SK-N-SH (cell line): ENCODE measurements at regions of chr15 and their contacts with region 1.

Region 1: GRCh38 chr15:77543159-77543882 is 89.4 kb downstream of the LINGO1 start:
- DNase-seq: peak; percentile 95
- H3K4me3 ChIP-seq: peak overlapping the region; percentile 42 to 46; a peak in 3 of 4 replicates
- H3K27ac ChIP-seq: peak overlapping the region; percentile 16 to 17; a peak in 1 of 4 replicates
- H3K4me1 ChIP-seq: peaks cover 16 to 25% of the 10 kb centered on the region in 2 experiments; a peak in 3 of 4 replicates
- H3K27me3 ChIP-seq: no peaks in the 10 kb centered on the region
- CTCF ChIP-seq: peak; percentile 97
- EP300 ChIP-seq: no peak
- RAD21 ChIP-seq: peak; percentile 99

Region 2: DNA sequence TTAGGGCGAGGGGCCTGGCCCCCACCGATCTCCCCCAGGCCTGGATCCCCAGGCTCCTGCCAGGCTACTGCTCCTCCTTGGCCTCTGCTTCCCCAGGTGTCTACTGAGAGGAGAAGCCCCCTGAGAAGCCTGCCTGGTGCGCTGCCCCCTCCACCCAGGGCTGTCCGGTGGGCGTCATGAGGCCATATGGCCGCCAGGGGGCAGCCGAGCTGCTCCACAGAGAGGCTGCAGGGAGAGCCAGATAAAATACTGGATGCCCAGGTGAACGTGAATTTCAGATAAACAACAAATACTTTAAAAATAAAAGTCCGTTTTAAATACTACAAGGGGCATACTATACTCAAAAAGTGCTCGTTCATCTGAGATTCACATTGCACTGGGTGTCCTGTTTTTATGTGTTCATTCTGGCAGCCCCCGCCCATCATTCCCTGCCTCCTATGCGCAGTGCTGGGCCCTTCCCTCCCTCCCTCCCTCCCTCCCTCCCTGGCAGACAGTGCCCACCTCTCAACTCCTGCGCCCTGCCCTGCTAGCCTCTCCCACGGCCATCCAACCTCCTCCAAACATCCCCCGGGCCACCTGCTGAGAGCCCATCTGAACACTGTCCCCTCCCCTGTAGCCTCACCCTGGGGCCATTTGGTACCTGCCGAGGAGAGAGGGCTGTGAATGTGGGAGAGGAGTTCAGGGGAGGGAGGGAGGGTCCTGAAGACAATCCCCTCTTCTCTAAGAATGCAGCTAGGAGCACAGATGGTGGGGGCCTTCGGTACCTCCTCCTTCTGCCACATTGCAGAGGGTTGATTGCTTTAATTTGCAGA is 518.8 kb before region 1 on chr15:
- CTCF ChIA-PET with region 1: interaction called, 26 read pairs
- POLR2A ChIA-PET with region 1: no interaction called
- DNase-seq: peak; percentile 94
- H3K4me3 ChIP-seq: no peak overlapping the region; a peak in 1 of 4 replicates
- H3K27ac ChIP-seq: no peak overlapping the region
- H3K4me1 ChIP-seq: peaks cover 0 to 10% of the 10 kb centered on the region in 2 experiments; a peak in 3 of 4 replicates
- H3K27me3 ChIP-seq: no peaks in the 10 kb centered on the region
- CTCF ChIP-seq: peak; percentile 94
- EP300 ChIP-seq: no peak
- RAD21 ChIP-seq: peak; percentile 81

Region 3: DNA sequence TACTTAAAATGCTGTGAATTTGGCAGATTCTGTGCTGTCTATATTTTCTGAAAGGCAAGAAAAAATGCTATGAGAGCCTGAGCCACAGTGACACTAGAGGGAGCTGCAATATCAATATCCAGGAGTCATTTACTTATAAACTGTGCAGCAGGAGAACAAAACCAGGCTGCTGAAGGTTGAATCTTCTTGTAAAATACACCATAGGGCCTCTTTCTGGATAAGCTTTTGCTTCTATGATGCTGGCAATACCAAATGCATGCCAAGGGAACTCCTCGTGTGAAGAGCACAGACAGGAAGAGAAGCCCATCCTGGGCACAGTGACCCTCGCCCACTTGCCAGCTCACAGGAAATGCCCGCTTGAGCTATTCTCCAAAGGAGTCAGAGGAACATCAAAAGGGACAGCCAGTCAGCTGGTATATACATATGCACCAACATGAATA is 424.4 kb before region 1 on chr15:
- CTCF ChIA-PET with region 1: interaction called, 134 read pairs
- POLR2A ChIA-PET with region 1: interaction called, 3 read pairs
- DNase-seq: peak; percentile 55
- H3K4me3 ChIP-seq: no peak overlapping the region
- H3K27ac ChIP-seq: peak overlapping the region in 1 of 2 experiments; percentile 45; a peak in 3 of 4 replicates
- H3K4me1 ChIP-seq: peaks cover 3 to 5% of the 10 kb centered on the region in 2 experiments
- H3K27me3 ChIP-seq: no peaks in the 10 kb centered on the region
- CTCF ChIP-seq: peak; percentile 86
- EP300 ChIP-seq: no peak
- RAD21 ChIP-seq: peak; percentile 94

Region 4: GRCh38 chr15:77186594-77187011 is 356.7 kb before region 1 on chr15:
- CTCF ChIA-PET with region 1: interaction called, 101 read pairs
- POLR2A ChIA-PET with region 1: no interaction called
- DNase-seq: peak; percentile 33
- H3K4me3 ChIP-seq: no peak overlapping the region; a peak in 1 of 4 replicates
- H3K27ac ChIP-seq: no peak overlapping the region; a peak in 1 of 4 replicates
- H3K4me1 ChIP-seq: peaks cover 11 to 26% of the 10 kb centered on the region in 2 experiments; a peak in 3 of 4 replicates
- H3K27me3 ChIP-seq: no peaks in the 10 kb centered on the region
- CTCF ChIP-seq: peak; percentile 66
- EP300 ChIP-seq: no peak
- RAD21 ChIP-seq: peak; percentile 84

Region 5: DNA sequence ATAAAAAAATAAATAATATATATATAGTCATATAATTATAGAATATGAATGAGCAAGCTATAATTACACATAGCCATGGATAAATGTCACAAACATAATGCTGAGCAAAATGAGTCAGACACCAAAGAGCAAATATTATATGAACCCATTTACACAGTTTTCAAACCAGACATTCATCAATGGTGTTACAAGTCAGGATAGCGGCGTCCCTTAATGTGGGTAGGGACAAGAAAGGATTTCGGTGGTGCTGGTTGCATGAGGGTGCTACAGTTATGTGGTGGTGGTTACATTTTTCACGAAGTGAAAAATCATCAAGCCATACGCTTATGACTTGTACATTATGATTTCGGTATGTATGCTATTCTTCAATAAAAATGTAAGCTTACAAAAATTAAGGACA is 22.1 kb before region 1 on chr15:
- CTCF ChIA-PET with region 1: interaction called, 10 read pairs
- POLR2A ChIA-PET with region 1: no interaction called
- DNase-seq: no peak
- H3K4me3 ChIP-seq: no peak overlapping the region
- H3K27ac ChIP-seq: no peak overlapping the region
- H3K4me1 ChIP-seq: no peaks in the 10 kb centered on the region; a peak in 2 of 4 replicates
- H3K27me3 ChIP-seq: no peaks in the 10 kb centered on the region
- CTCF ChIP-seq: no peak
- EP300 ChIP-seq: no peak
- RAD21 ChIP-seq: no peak

Region 6: DNA sequence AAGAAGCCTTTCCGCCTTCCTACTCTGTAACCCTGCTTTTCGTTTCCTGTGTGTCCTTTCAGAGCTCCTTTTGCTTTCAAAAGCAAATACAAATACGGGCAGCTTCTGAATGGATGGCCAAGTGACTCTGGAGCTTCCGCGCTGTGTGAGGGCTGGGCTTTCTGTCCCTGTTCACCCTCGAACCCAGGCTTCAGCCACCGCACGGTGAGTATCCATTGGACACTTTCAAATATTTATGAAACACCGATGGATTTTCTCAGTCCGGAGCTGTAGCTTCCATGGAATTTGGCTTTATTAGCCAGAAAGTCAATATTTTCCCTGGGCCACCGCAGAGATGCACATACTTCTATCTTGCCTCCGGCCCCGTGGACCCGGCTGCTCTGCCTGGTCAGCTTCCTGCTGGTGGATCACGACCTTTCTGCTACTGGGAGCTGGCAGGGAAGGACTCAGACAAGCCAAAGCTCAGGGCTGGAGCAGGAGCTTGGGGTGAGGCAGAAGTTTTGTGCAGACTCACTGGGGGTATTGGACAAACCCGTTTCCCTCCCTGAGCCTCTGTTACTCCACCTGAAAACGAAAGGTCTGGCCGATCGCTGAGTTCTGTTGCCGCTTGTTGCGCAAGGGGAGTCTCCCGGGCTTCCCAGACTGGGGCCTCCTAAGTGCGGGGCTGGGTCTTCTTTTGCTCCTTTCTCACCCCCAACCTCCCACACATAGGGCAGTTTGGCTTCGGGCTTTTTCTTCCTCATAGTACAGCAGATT is 25.8 kb after region 1 on chr15:
- CTCF ChIA-PET with region 1: interaction called, 21 read pairs
- POLR2A ChIA-PET with region 1: no interaction called
- DNase-seq: no peak
- H3K4me3 ChIP-seq: no peak overlapping the region
- H3K27ac ChIP-seq: peak overlapping the region in 1 of 2 experiments; percentile 47; a peak in 2 of 4 replicates
- H3K4me1 ChIP-seq: peaks cover 0 to 22% of the 10 kb centered on the region in 2 experiments; a peak in 1 of 4 replicates
- H3K27me3 ChIP-seq: no peaks in the 10 kb centered on the region
- CTCF ChIP-seq: no peak
- EP300 ChIP-seq: no peak
- RAD21 ChIP-seq: no peak

Region 7: DNA sequence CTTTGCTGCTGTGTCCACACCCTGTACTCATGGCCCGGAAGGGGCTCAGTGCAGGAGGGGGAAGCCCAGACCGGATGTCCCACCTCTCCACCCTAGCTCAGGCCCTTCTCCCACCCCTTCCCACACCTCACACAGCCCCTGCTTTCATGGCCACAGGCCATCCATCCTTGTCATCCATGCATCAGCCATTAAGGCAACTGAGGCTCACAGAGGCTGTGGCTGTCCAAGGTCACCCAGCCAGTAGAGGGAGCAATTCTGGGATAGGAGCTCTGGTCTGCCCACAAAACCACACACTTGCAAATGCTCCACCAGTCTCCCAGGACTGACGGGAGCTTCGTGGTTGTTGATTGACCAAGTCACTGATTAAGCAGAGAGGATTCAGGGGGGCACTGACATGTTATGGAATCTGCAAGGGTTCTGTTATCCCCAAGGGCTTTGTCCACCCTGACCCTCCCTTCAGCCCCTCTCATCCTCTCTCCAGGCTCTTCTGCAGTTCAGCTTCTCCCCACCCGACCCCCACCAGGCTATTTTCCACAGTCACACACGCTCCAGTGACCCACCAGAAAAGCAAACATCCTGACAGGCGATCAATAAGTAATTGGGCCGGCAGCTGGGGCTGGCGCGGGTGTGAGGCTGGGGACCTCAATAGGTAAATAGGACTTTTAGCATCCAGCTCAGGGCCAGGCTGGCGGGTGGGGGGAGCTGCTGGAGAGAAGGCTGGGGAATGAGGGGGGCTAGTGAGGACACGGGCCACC is 74.3 kb after region 1 on chr15:
- CTCF ChIA-PET with region 1: interaction called, 10 read pairs
- POLR2A ChIA-PET with region 1: no interaction called
- DNase-seq: no peak
- H3K4me3 ChIP-seq: no peak overlapping the region
- H3K27ac ChIP-seq: no peak overlapping the region
- H3K4me1 ChIP-seq: peaks cover 0 to 13% of the 10 kb centered on the region in 2 experiments; a peak in 1 of 4 replicates
- H3K27me3 ChIP-seq: no peaks in the 10 kb centered on the region
- CTCF ChIP-seq: peak; percentile 47
- EP300 ChIP-seq: no peak
- RAD21 ChIP-seq: no peak

Region 8: GRCh38 chr15:77702211-77702957 is 159.1 kb after region 1 on chr15:
- CTCF ChIA-PET with region 1: no interaction called
- POLR2A ChIA-PET with region 1: no interaction called
- DNase-seq: no peak
- H3K4me3 ChIP-seq: no peak overlapping the region
- H3K27ac ChIP-seq: no peak overlapping the region
- H3K4me1 ChIP-seq: no peaks in the 10 kb centered on the region
- H3K27me3 ChIP-seq: 0 out of 2 replicates have a peak, but pooled peaks cover 4% of the 10 kb centered on the region
- CTCF ChIP-seq: no peak
- EP300 ChIP-seq: no peak
- RAD21 ChIP-seq: no peak

Region 9: GRCh38 chr15:77798151-77798835 is 255.0 kb after region 1 on chr15:
- CTCF ChIA-PET with region 1: no interaction called
- POLR2A ChIA-PET with region 1: no interaction called
- DNase-seq: no peak
- H3K4me3 ChIP-seq: no peak overlapping the region
- H3K27ac ChIP-seq: no peak overlapping the region
- H3K4me1 ChIP-seq: peaks cover 0 to 3% of the 10 kb centered on the region in 2 experiments; a peak in 1 of 4 replicates
- H3K27me3 ChIP-seq: peaks cover 17% of the 10 kb centered on the region; the same call in 1 of the 2 replicates
- CTCF ChIP-seq: no peak
- EP300 ChIP-seq: no peak
- RAD21 ChIP-seq: no peak